WTC11 (cell line): ENCODE measurements at regions of chr17 and their contacts with region 1.

Region 1: DNA sequence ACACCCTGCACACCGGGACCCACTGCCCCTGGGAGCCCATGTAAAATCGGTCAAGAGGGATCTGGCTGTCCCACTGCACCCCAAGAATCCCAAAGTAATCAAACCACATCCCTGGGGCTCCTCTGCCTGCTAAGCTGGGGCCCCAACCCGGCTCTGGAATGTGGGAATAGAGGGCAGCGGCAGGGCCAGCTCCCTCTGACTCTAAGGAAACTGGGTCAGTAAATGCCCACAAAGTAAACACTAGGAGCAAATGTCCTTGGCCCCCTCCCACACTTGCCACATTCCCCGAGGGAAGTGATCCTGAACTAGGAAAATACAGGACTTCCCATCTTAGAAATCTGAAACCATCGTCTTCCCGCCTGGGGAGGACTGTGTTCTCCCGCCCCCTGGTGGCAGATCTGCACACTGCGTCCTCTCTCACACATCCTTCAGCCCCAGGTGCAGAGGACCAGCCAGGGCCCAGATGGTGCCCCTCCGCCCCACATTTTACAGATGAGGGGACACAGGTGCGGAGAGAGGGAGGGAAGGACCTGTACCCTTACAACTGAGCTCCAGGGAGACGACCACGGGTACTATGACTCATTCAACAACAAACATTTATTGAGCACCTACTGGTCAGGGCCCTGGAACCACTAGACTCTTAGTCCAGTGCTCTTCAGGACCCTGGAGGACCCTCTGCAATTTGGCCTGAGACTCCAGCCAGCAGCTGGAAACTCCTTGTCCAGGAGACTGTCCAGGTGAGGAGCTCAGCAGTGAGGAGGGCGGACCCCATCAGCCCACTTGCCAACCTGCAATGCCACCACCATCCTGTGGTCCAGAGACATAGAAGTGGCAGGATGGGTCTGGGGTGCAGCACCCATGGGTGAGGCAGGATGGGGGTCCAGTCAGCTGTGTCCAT is 10.1 kb downstream of the P3H4 start:
- DNase-seq: peak; percentile 94
- ATAC-seq: peak; percentile 54
- H3K4me3 Mint-ChIP-seq: peak overlapping the region; percentile 66
- H3K27ac Mint-ChIP-seq: peak overlapping the region; percentile 97
- H3K4me1 Mint-ChIP-seq: peaks cover 26% of the 10 kb centered on the region
- H3K27me3 Mint-ChIP-seq: no peaks in the 10 kb centered on the region
- CTCF ChIP-seq: peak; percentile 97

Region 2: GRCh38 chr17:41738077-41738735 is 63.4 kb before region 1 on chr17:
- CTCF ChIA-PET with region 1: interaction called, 27 read pairs
- POLR2A ChIA-PET with region 1: interaction called, 5 read pairs
- DNase-seq: peak; percentile 91
- ATAC-seq: peak; percentile 71
- H3K4me3 Mint-ChIP-seq: no peak overlapping the region
- H3K27ac Mint-ChIP-seq: peak overlapping the region; percentile 82
- H3K4me1 Mint-ChIP-seq: peaks cover 22% of the 10 kb centered on the region
- H3K27me3 Mint-ChIP-seq: peaks cover 47% of the 10 kb centered on the region
- CTCF ChIP-seq: peak; percentile 98

Region 3: DNA sequence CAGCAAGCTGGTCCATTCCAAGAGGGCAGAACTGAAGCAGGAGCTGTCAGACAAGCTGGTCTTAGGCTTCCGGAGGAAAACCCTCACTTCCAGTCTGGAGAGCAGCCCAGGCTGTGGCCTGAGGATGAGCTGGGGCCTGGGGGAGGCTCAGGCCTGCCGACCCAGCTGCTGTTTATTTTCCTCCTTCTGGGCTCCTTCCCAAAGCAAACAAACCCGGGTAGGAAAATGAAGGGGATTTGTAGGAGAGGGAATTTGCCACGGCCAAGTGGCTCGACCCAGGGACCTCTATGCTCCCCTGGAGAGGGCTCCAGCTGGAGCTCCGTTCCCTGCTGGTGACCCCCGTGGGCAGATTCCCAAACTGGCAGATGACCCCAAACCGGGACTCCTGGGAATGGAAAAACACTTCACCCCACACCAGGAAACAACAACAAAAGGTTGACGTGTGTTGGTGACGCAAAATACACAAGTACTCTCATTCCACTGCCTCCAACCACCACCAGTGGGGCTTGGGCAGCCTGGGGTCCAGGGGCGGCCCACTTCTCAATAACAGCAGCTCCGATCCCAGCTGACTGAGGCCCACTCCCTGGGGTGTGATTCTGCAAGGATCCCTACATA is 23.9 kb before region 1 on chr17:
- CTCF ChIA-PET with region 1: interaction called, 252 read pairs
- POLR2A ChIA-PET with region 1: interaction called, 3 read pairs
- DNase-seq: no peak
- ATAC-seq: no peak
- H3K4me3 Mint-ChIP-seq: no peak overlapping the region
- H3K27ac Mint-ChIP-seq: peak overlapping the region; percentile 70; the same call in 1 of the 2 replicates
- H3K4me1 Mint-ChIP-seq: peaks cover 64% of the 10 kb centered on the region
- H3K27me3 Mint-ChIP-seq: no peaks in the 10 kb centered on the region
- CTCF ChIP-seq: no peak

Region 4: GRCh38 chr17:41873559-41874292 is 72.1 kb after region 1 on chr17:
- CTCF ChIA-PET with region 1: no interaction called
- POLR2A ChIA-PET with region 1: no interaction called
- DNase-seq: no peak
- ATAC-seq: no peak
- H3K4me3 Mint-ChIP-seq: no peak overlapping the region
- H3K27ac Mint-ChIP-seq: no peak overlapping the region
- H3K4me1 Mint-ChIP-seq: no peaks in the 10 kb centered on the region
- H3K27me3 Mint-ChIP-seq: no peaks in the 10 kb centered on the region
- CTCF ChIP-seq: no peak